ENCODE measurements at regions of chr9 and their contacts with region 1.

Region 1: GRCh38 chr9:112355427-112355897 is 22.0 kb upstream of the PTBP3 start:
- DNase-seq: peak in 2 of 4 donors; percentile 40 to 75
- ATAC-seq: peak; percentile 76
- H3K4me3 ChIP-seq: no peak overlapping the region
- H3K27ac ChIP-seq: peak overlapping the region in 1 of 2 donors; percentile 11
- H3K4me1 ChIP-seq: no peaks in the 10 kb centered on the region
- H3K27me3 ChIP-seq: no peaks in the 10 kb centered on the region
- CTCF ChIP-seq: no peak

Region 2: DNA sequence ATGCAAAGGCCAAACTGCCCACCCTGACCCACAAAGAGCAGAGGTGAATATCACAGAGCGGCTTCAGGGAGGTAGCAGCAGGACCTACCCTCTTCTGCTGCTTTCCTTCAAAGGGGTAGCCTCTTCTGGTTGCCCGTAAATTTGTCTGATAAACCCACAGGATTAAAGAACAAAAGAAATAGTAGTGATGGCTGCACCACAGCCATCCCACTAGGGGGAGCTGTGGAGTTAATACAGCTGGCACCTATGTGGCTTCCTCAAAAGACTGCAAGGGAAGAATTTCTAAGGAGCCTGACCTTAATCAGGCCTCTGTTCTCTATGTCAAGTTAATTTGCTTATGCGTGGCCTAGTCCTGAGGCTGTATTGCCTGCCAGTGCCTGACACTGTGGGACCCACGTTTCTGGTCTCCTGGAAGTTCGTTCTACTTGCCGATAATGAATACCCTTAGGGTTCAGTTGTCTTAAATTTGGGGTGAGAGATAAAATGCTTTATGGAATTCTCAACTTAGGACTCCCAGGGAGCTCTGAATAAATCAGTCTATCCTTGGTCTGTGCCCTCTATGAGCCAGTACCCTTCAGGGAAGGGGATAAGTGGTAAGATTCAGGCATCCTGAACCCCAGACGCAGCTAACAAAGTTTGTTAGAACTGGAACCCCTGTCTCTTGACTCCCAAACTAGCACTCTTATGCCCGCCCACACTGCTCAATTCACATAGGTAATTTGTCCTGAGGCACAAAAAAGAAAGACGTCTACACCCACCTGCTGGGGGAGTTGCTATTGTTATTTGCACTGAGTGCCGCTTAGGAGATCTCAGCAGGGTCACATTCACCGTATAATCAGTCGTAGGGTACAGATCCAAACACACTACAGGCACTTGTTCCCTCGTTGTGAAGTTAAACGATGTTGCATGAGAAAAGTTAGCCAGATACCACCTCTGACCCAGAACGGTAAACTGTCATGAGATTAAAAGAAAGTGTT is 257.5 kb before region 1 on chr9:
- intact Hi-C with region 1: loop called in 1 of 2 experiments (anchors 10 kb)
- DNase-seq: peak in 3 of 4 donors; percentile 56 to 84 (median 62)
- ATAC-seq: peak; percentile 97
- H3K4me3 ChIP-seq: no peak overlapping the region
- H3K27ac ChIP-seq: no peak overlapping the region
- H3K4me1 ChIP-seq: peaks cover 0 to 16% of the 10 kb centered on the region in 2 donors
- H3K27me3 ChIP-seq: no peaks in the 10 kb centered on the region
- CTCF ChIP-seq: peak; percentile 80 to 95

Region 3: DNA sequence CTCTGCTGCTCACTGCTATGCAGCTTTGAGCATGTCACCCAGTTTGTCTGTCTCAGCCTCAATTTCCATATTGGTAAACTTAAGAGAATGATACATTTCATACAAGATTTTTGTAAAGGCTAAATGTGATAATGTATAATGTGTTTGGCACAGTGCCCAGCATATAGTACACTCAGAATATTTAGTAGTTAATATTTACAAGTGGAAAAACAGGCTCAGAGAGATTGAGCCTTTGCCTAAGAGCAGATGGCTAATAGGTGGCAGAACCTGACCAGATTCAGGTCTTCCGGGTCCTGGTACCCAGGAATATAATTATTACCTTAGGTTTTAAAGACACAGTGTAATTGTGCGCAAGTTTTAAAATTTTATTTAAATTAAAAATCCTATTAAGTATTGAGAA is 84.4 kb after region 1 on chr9:
- intact Hi-C with region 1: no loop called
- DNase-seq: peak in 2 of 4 donors; percentile 12 to 35
- ATAC-seq: no peak
- H3K4me3 ChIP-seq: no peak overlapping the region
- H3K27ac ChIP-seq: no peak overlapping the region
- H3K4me1 ChIP-seq: no peaks in the 10 kb centered on the region
- H3K27me3 ChIP-seq: no peaks in the 10 kb centered on the region
- CTCF ChIP-seq: no peak